ENCODE measurements at regions of chr10 and their contacts with region 1.

Region 1: DNA sequence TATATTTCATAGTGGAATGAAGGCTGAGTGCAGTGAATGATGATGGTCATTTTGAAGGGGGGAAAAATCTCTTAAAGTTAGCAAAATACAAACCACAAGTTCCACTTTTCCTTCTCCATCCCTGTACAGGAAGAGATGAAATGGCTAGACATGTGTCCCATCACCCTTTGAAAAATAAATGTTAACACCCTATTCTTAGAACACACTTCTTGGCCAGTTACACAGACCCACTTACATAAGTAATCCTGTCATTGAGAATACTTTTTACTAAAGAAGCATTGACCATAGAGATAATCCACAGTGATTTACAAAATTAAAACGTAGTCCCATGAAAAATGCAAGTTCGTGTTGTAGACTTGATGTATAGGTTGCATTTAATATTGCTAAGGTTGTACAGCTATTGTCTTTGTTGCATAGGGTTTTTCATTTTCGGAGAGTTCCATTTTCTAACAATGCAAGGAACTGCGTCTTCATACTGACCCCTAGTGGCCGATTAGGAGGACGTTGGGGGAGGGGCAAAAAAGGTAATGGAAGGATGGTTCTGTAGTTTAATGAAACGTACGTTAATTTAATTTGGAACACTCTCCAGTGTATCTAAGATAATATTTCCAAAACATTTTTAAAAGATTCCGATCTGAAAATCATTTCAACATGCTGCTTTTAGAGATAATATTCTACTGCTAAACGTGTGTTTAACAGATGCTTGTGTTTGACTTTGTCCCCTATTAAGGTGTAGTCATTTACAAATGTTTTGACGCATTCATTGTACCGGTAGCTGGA is 60.9 kb downstream of the ARMC3 start:
- DNase-seq: peak; percentile 43 to 78 (median 69)
- H3K4me3 ChIP-seq: no peak overlapping the region
- H3K4me3 Mint-ChIP-seq: peak overlapping the region in 1 of 7 donors; percentile 9
- H3K27ac ChIP-seq: no peak overlapping the region
- H3K27ac Mint-ChIP-seq: peak overlapping the region in 3 of 8 donors; percentile 47 to 57 (median 51)
- H3K4me1 ChIP-seq: no peaks in the 10 kb centered on the region
- H3K4me1 Mint-ChIP-seq: peaks cover 8 to 17% (median 17%) of the 10 kb centered on the region in 3 donors
- H3K27me3 ChIP-seq: no peaks in the 10 kb centered on the region
- H3K27me3 Mint-ChIP-seq: peaks cover 4 to 8% of the 10 kb centered on the region in 2 donors

Region 2: GRCh38 chr10:22003079-22003913 is 985.5 kb before region 1 on chr10 and contains the start of gene DNAJC1:
- CTCF ChIA-PET with region 1: interaction called, 16 read pairs
- POLR2A ChIA-PET with region 1: no interaction called
- DNase-seq: peak; percentile 96 to 99 (median 97)
- H3K4me3 ChIP-seq: peak within 1 kb of the TSS; percentile 72
- H3K4me3 Mint-ChIP-seq: peak within 1 kb of the TSS; percentile 92 to 99 (median 95)
- H3K27ac ChIP-seq: peak within 1 kb of the TSS; percentile 93
- H3K27ac Mint-ChIP-seq: peak within 1 kb of the TSS; percentile 92 to 98 (median 97)
- H3K4me1 ChIP-seq: peaks cover 30% of the 10 kb centered on the region
- H3K4me1 Mint-ChIP-seq: peaks cover 40 to 49% (median 48%) of the 10 kb centered on the region in 3 donors
- H3K27me3 ChIP-seq: no peaks in the 10 kb centered on the region
- H3K27me3 Mint-ChIP-seq: peaks cover 3 to 17% of the 10 kb centered on the region in 2 donors
- total RNA-seq, gene DNAJC1: 30.8 to 31.8 TPM

Region 3: GRCh38 chr10:22010973-22011408 is 977.8 kb before region 1 on chr10:
- CTCF ChIA-PET with region 1: interaction called, 12 read pairs
- POLR2A ChIA-PET with region 1: interaction called, 5 read pairs
- DNase-seq: peak in 2 of 5 donors; percentile 26 to 36
- H3K4me3 ChIP-seq: no peak overlapping the region
- H3K4me3 Mint-ChIP-seq: no peak overlapping the region
- H3K27ac ChIP-seq: no peak overlapping the region
- H3K27ac Mint-ChIP-seq: no peak overlapping the region
- H3K4me1 ChIP-seq: no peaks in the 10 kb centered on the region
- H3K4me1 Mint-ChIP-seq: no peaks in the 10 kb centered on the region
- H3K27me3 ChIP-seq: no peaks in the 10 kb centered on the region
- H3K27me3 Mint-ChIP-seq: peaks cover 9 to 23% of the 10 kb centered on the region in 2 donors

Region 4: GRCh38 chr10:22550732-22551131 is 438.0 kb before region 1 on chr10:
- CTCF ChIA-PET with region 1: interaction called, 10 read pairs
- POLR2A ChIA-PET with region 1: no interaction called
- DNase-seq: peak; percentile 55 to 81 (median 65)
- H3K4me3 ChIP-seq: no peak overlapping the region
- H3K4me3 Mint-ChIP-seq: peak overlapping the region in 1 of 7 donors; percentile 46
- H3K27ac ChIP-seq: no peak overlapping the region
- H3K27ac Mint-ChIP-seq: peak overlapping the region in 7 of 8 donors; percentile 40 to 92 (median 69)
- H3K4me1 ChIP-seq: no peaks in the 10 kb centered on the region
- H3K4me1 Mint-ChIP-seq: peaks cover 33 to 41% (median 38%) of the 10 kb centered on the region in 3 donors
- H3K27me3 ChIP-seq: no peaks in the 10 kb centered on the region
- H3K27me3 Mint-ChIP-seq: no peaks in the 10 kb centered on the region

Region 5: DNA sequence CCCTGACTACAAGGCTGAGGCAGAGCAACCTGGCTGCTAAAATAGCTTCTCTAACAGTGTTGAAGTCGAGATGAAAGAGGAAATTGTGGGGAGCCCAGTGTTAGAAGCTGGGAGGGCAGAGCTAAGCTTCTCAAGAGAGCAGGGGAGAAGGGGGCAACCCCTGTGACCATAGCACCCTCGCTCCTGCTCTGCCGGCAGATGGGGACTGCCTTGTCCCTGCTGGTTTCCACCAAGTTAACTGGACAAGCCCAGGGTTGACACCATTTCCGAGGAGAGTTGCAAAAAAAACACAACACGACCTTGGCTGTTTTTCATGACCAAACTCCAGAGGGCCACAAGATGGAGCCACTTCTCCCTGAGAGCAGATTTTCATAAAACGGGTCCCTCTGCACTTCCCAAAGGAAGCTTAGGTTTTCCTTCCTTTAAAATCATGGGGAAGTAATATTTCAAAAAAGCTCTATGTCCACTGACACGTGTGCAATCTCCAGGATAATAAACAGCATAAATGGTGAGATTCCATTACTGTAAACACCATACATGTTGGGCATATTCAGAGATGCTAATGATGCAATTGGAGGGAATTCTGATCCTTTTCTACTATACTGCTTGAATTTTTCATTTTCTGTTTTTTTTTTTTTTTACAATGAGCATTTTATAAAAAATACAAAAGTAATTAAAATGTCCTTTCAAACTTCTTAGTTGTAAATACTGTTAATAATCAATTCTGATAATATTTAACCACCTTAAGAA is 414.8 kb before region 1 on chr10:
- CTCF ChIA-PET with region 1: interaction called, 18 read pairs
- POLR2A ChIA-PET with region 1: no interaction called
- DNase-seq: peak in 4 of 5 donors; percentile 3 to 64 (median 40)
- H3K4me3 ChIP-seq: no peak overlapping the region
- H3K4me3 Mint-ChIP-seq: peak overlapping the region; percentile 4 to 82 (median 58)
- H3K27ac ChIP-seq: peak overlapping the region; percentile 35
- H3K27ac Mint-ChIP-seq: peak overlapping the region; percentile 68 to 96 (median 90)
- H3K4me1 ChIP-seq: peaks cover 33% of the 10 kb centered on the region
- H3K4me1 Mint-ChIP-seq: peaks cover 66 to 89% (median 87%) of the 10 kb centered on the region in 3 donors
- H3K27me3 ChIP-seq: no peaks in the 10 kb centered on the region
- H3K27me3 Mint-ChIP-seq: no peaks in the 10 kb centered on the region

Region 6: DNA sequence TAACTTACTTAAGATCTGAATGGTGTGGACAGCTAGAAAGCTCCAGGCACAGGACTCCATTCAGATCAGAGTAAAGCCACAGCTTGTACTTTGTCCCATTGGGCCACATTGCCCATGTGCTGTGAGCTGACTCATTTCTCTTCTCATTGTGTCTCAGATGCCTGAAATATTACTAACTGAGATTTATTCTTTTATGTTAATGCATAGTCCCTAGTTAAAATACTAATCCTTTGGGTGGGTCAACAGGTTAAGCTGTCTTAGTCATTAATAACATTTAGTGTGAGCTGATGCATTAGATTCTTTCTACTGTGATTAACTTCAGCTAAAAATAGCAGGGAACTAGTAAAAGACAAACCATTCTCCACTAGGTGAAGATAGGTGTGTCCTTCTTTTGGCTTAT is 165.7 kb before region 1 on chr10:
- CTCF ChIA-PET with region 1: no interaction called
- POLR2A ChIA-PET with region 1: no interaction called
- DNase-seq: no peak
- H3K4me3 ChIP-seq: no peak overlapping the region
- H3K4me3 Mint-ChIP-seq: no peak overlapping the region
- H3K27ac ChIP-seq: no peak overlapping the region
- H3K27ac Mint-ChIP-seq: no peak overlapping the region
- H3K4me1 ChIP-seq: no peaks in the 10 kb centered on the region
- H3K4me1 Mint-ChIP-seq: no peaks in the 10 kb centered on the region
- H3K27me3 ChIP-seq: no peaks in the 10 kb centered on the region
- H3K27me3 Mint-ChIP-seq: peaks cover 7 to 33% of the 10 kb centered on the region in 2 donors

Region 7: DNA sequence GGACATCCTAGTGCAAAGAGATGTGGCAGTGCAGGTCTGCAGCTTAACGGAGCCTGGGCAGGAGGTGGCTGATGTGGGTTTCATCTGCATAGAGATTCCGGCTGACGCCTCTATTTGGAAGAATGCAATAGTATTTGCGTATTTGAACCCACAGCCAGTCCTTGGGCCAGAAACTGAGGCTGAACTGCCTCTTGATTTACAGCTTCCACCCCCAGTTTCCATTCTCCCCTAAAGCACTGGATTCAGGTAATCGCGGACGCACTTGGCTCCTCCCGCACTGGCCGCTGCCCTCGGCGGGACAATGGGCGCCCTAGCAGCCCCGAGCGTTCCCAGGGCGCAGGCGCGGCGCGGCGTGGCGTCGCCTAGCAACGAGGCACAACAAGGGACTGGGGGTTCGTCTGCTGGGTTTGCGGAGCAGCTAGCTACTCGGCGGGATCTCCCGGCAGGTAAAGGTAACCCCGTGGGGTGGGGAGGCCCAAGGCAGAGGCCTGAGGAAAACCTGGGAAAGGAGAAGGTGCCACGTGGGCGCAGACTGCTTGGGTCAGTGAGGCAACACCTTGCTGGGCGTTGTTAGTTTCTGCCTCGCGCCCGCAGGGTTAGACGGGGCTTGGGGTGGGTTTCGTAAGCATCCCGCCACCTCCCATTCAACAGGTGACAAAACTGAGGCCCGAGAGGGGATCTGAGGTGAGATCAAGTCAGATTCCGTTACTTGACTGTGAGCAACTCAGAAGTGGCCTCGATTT is 60.9 kb before region 1 on chr10 and contains the start of gene ARMC3:
- CTCF ChIA-PET with region 1: no interaction called
- POLR2A ChIA-PET with region 1: no interaction called
- DNase-seq: peak; percentile 44 to 86 (median 73)
- H3K4me3 ChIP-seq: peak within 1 kb of the TSS; percentile 64
- H3K4me3 Mint-ChIP-seq: no peak within 1 kb of the TSS
- H3K27ac ChIP-seq: peak within 1 kb of the TSS; percentile 25
- H3K27ac Mint-ChIP-seq: peak within 1 kb of the TSS in 2 of 8 donors; percentile 61 to 65
- H3K4me1 ChIP-seq: peaks cover 12% of the 10 kb centered on the region
- H3K4me1 Mint-ChIP-seq: no peaks in the 10 kb centered on the region
- H3K27me3 ChIP-seq: no peaks in the 10 kb centered on the region
- H3K27me3 Mint-ChIP-seq: peaks cover 4 to 19% of the 10 kb centered on the region in 2 donors
- total RNA-seq, gene ARMC3: not detected

Region 8: GRCh38 chr10:22958338-22958737 is 30.4 kb before region 1 on chr10:
- CTCF ChIA-PET with region 1: no interaction called
- POLR2A ChIA-PET with region 1: no interaction called
- DNase-seq: no peak
- H3K4me3 ChIP-seq: no peak overlapping the region
- H3K4me3 Mint-ChIP-seq: no peak overlapping the region
- H3K27ac ChIP-seq: no peak overlapping the region
- H3K27ac Mint-ChIP-seq: no peak overlapping the region
- H3K4me1 ChIP-seq: no peaks in the 10 kb centered on the region
- H3K4me1 Mint-ChIP-seq: no peaks in the 10 kb centered on the region
- H3K27me3 ChIP-seq: no peaks in the 10 kb centered on the region
- H3K27me3 Mint-ChIP-seq: no peaks in the 10 kb centered on the region

Region 9: GRCh38 chr10:24008164-24009091 is 1019.7 kb after region 1 on chr10:
- CTCF ChIA-PET with region 1: no interaction called
- POLR2A ChIA-PET with region 1: no interaction called
- DNase-seq: no peak
- H3K4me3 ChIP-seq: no peak overlapping the region
- H3K4me3 Mint-ChIP-seq: no peak overlapping the region
- H3K27ac ChIP-seq: no peak overlapping the region
- H3K27ac Mint-ChIP-seq: no peak overlapping the region
- H3K4me1 ChIP-seq: no peaks in the 10 kb centered on the region
- H3K4me1 Mint-ChIP-seq: no peaks in the 10 kb centered on the region
- H3K27me3 ChIP-seq: no peaks in the 10 kb centered on the region
- H3K27me3 Mint-ChIP-seq: peaks cover 0 to 3% of the 10 kb centered on the region in 2 donors